ENCODE measurements at regions of chr6 and their contacts with region 1.

Region 1: GRCh38 chr6:29649701-29650673 is 6.9 kb upstream of the MOG start:
- DNase-seq: peak; percentile 90
- ATAC-seq: peak; percentile 98
- H3K4me3 ChIP-seq: peak overlapping the region; percentile 47 to 78
- H3K27ac ChIP-seq: peak overlapping the region; percentile 77; the same call in 1 of the 2 replicates
- H3K4me1 ChIP-seq: peaks cover 3% of the 10 kb centered on the region
- H3K27me3 ChIP-seq: no peaks in the 10 kb centered on the region
- CTCF ChIP-seq: peak; percentile 96

Region 2: GRCh38 chr6:29696155-29697125 is 46.5 kb after region 1 on chr6:
- CTCF ChIA-PET with region 1: interaction called, 13 read pairs
- POLR2A ChIA-PET with region 1: no interaction called
- in situ Hi-C with region 1: no loop called
- intact Hi-C with region 1: no loop called
- DNase-seq: no peak
- ATAC-seq: peak; percentile 69
- H3K4me3 ChIP-seq: no peak overlapping the region
- H3K27ac ChIP-seq: no peak overlapping the region
- H3K4me1 ChIP-seq: no peaks in the 10 kb centered on the region
- H3K27me3 ChIP-seq: peaks cover under 1% of the 10 kb centered on the region; the same call in 1 of the 2 replicates
- CTCF ChIP-seq: peak; percentile 84